Motor neuron (in vitro differentiated cells): ENCODE measurements at regions of chr17 and their contacts with region 1.

Region 1: GRCh38 chr17:47978324-47978723 is 7.4 kb downstream of the CDK5RAP3 start:
- ATAC-seq: peak; percentile 60 to 99 (median 78)
- H3K4me3 ChIP-seq: no peak overlapping the region
- H3K27ac ChIP-seq: no peak overlapping the region
- H3K4me1 ChIP-seq: peaks cover 21% of the 10 kb centered on the region in 2 donors

Region 2: GRCh38 chr17:47895856-47896671 is 82.3 kb before region 1 on chr17 and contains the start of gene SP2:
- in situ Hi-C with region 1: no loop called
- ATAC-seq: peak; percentile 88 to 94 (median 94)
- H3K4me3 ChIP-seq: peak within 1 kb of the TSS; percentile 87 to 97 (median 93)
- H3K27ac ChIP-seq: peak within 1 kb of the TSS; percentile 99 to 100
- H3K4me1 ChIP-seq: peaks cover 8 to 10% of the 10 kb centered on the region in 2 donors
- total RNA-seq, gene SP2: 1.4 to 6.9 (median 4.4) TPM

Region 3: DNA sequence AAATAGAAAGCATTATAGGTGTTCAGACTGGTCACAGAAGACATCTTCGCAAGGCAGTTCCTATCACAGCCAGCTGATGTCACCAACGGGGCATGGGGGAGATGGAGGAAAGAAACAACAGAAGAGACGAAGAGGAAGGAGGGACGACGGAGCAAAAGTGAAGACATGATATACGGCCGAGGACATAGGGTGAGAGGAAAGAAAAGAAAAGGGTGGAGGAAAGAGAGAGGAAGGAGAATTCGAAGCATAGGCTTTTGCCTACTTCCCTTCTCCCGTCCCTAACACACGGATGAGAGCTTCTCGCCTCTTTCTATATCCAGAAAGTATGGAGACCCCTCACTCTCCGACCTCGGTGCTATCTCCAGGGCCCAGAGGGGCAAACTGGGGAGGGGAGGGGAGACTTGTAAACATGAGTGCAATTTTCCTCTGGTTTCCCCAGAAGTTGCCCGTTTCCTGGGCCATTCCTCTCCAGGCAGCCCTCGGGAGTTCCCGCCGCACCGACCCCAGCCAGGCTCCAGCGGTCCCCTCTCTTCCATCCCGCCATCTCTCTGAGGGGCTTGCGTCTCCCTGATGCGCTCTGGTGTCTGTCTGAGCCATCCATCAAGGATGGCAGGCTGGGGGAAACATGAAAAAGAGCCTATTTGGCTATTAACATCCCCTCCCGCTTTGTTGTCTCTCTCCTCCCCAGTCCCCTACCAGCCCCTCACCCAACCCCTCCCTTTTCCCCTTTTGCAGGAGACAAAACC is 33.3 kb after region 1 on chr17:
- in situ Hi-C with region 1: loop called in 4 of 9 experiments (anchors 5 kb)
- ATAC-seq: peak in 7 of 8 experiments; percentile 18 to 76 (median 42)
- H3K4me3 ChIP-seq: peak overlapping the region; percentile 14 to 32 (median 23)
- H3K27ac ChIP-seq: peak overlapping the region; percentile 78 to 87
- H3K4me1 ChIP-seq: peaks cover 45 to 47% of the 10 kb centered on the region in 2 donors

Region 4: GRCh38 chr17:48084932-48085444 is 106.7 kb after region 1 on chr17:
- in situ Hi-C with region 1: no loop called
- ATAC-seq: no peak
- H3K4me3 ChIP-seq: no peak overlapping the region
- H3K27ac ChIP-seq: no peak overlapping the region
- H3K4me1 ChIP-seq: peaks cover 2 to 14% of the 10 kb centered on the region in 2 donors

Region 5: GRCh38 chr17:48139944-48140343 is 161.6 kb after region 1 on chr17:
- in situ Hi-C with region 1: no loop called
- ATAC-seq: no peak
- H3K4me3 ChIP-seq: no peak overlapping the region
- H3K27ac ChIP-seq: no peak overlapping the region
- H3K4me1 ChIP-seq: peaks cover 18 to 31% of the 10 kb centered on the region in 2 donors